Stomach (tissue), 19 donors: ENCODE measurements at regions of chr9 and their contacts with region 1.

Region 1: GRCh38 chr9:129610473-129611301 is 10.2 kb downstream of the C9orf50 start:
- DNase-seq: peak; percentile 82 to 91
- H3K4me3 ChIP-seq: peak overlapping the region; percentile 65 to 69 (median 66)
- H3K27ac ChIP-seq: peak overlapping the region; percentile 89 to 98 (median 94)
- H3K4me1 ChIP-seq: peaks cover 37 to 68% (median 58%) of the 10 kb centered on the region in 4 donors
- H3K27me3 ChIP-seq: no peaks in the 10 kb centered on the region
- CTCF ChIP-seq: peak in 6 of 7 experiments; percentile 6 to 98 (median 90)
- EP300 ChIP-seq: no peak
- POLR2A ChIP-seq: no peak

Region 2: GRCh38 chr9:129139993-129140396 is 470.7 kb before region 1 on chr9:
- intact Hi-C with region 1: loop called (anchors 5 kb)
- DNase-seq: peak; percentile 89 to 99
- H3K4me3 ChIP-seq: peak overlapping the region; percentile 38 to 46 (median 44)
- H3K27ac ChIP-seq: peak overlapping the region; percentile 98 to 100 (median 98)
- H3K4me1 ChIP-seq: peaks cover 64 to 79% (median 66%) of the 10 kb centered on the region in 4 donors
- H3K27me3 ChIP-seq: no peaks in the 10 kb centered on the region
- CTCF ChIP-seq: no peak
- EP300 ChIP-seq: peak; percentile 74
- POLR2A ChIP-seq: peak in 2 of 4 donors; percentile 12 to 24

Region 3: GRCh38 chr9:129495534-129496325 is 115.0 kb before region 1 on chr9:
- intact Hi-C with region 1: loop called (anchors 10 kb)
- DNase-seq: peak; percentile 96 to 98
- H3K4me3 ChIP-seq: peak overlapping the region; percentile 50 to 65 (median 60)
- H3K27ac ChIP-seq: peak overlapping the region; percentile 97 to 100 (median 100)
- H3K4me1 ChIP-seq: peaks cover 77 to 97% (median 90%) of the 10 kb centered on the region in 4 donors
- H3K27me3 ChIP-seq: no peaks in the 10 kb centered on the region
- CTCF ChIP-seq: no peak
- EP300 ChIP-seq: no peak
- POLR2A ChIP-seq: peak in 1 of 4 donors; percentile 48